ENCODE measurements at regions of chr5 and their contacts with region 1.

Region 1: DNA sequence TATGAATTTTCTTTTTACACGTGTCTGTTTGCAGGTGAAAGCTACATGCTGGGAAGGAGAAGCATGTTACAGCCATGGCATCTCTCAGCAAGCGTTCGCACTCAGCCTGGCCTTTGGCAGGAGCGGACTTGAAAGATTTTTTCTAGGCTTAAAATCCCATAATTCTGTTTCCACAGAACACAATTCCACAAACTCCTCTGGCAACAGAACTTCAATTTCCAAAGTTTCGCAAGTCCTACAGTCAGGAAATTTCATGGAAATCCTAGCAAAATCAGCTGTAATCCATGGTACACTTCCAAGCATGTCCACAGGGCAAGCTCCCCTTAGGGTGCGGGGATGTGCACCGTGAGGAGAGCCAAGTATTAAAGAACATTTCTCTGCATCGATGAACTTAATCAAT is 35.9 kb downstream of the SUB1 start:
- DNase-seq: no peak
- H3K4me3 ChIP-seq: no peak overlapping the region
- H3K27ac ChIP-seq: no peak overlapping the region
- H3K4me1 ChIP-seq: no peaks in the 10 kb centered on the region
- H3K27me3 ChIP-seq: no peaks in the 10 kb centered on the region
- CTCF ChIP-seq: no peak
- EP300 ChIP-seq: no peak
- POLR2A ChIP-seq: no peak

Region 2: DNA sequence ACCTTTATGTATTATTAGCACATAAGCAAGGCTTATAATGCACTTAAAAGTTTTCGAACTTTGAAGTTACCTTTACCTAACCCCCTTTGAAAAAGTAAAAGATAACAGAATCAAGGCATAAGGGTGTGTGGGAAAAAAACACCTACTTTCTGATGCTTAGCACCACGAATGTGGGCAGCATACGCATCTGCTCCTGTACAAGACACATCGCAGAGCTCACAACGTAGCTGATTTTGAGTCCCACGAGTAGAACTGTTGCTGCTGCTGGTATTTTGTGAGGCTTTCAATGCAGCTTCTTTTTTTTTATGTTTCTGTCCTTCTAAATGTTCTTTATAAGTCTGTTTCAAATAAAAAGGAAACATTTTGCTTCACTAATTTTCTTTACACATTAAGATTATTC is 217.5 kb before region 1 on chr5:
- intact Hi-C with region 1: no loop called
- DNase-seq: no peak
- H3K4me3 ChIP-seq: no peak overlapping the region
- H3K27ac ChIP-seq: no peak overlapping the region
- H3K4me1 ChIP-seq: no peaks in the 10 kb centered on the region
- H3K27me3 ChIP-seq: no peaks in the 10 kb centered on the region
- CTCF ChIP-seq: no peak
- EP300 ChIP-seq: no peak
- POLR2A ChIP-seq: no peak

Region 3: GRCh38 chr5:32559921-32560320 is 61.3 kb before region 1 on chr5:
- intact Hi-C with region 1: loop called in 1 of 4 experiments (anchors 2 kb)
- DNase-seq: no peak
- H3K4me3 ChIP-seq: no peak overlapping the region
- H3K27ac ChIP-seq: no peak overlapping the region
- H3K4me1 ChIP-seq: no peaks in the 10 kb centered on the region
- H3K27me3 ChIP-seq: no peaks in the 10 kb centered on the region
- CTCF ChIP-seq: no peak
- EP300 ChIP-seq: no peak
- POLR2A ChIP-seq: no peak

Region 4: GRCh38 chr5:33166522-33166921 is 545.3 kb after region 1 on chr5:
- intact Hi-C with region 1: no loop called
- DNase-seq: no peak
- H3K4me3 ChIP-seq: no peak overlapping the region
- H3K27ac ChIP-seq: no peak overlapping the region
- H3K4me1 ChIP-seq: no peaks in the 10 kb centered on the region
- H3K27me3 ChIP-seq: no peaks in the 10 kb centered on the region
- CTCF ChIP-seq: no peak
- EP300 ChIP-seq: no peak
- POLR2A ChIP-seq: no peak

Measured in ovary (tissue), 10 donors.